CD4-positive, alpha-beta T cell (primary cell): ENCODE measurements at regions of chr18 and their contacts with region 1.

Region 1: DNA sequence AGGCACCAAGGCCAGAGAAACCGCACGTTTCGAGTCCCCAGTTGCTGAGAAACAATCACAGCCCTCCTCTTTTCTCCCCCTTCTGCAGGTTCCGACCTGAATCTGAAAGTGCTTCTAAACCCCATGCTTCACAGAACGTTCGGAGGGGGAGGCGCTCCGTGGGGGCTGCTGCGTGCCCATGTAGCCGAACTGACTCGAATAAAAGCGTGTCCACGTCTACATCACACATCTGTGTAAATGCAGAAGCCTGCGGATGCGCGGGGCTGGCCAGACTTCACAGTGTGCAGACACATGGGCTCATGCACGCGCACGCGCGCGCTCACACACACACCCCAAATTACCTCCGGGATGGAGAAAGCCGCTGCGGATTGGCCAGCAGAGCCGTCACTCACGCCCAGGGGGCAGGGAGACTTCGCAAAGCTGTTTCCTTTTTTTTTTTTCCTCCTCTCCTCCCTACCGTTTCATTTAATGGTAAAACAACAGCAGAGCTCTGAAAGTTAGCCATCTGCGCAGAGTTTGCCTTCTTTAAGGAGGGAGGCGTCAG is 2.3 kb downstream of the ZNF516 start:
- DNase-seq: peak; percentile 96 to 100 (median 98)
- ATAC-seq: peak; percentile 68
- H3K4me3 ChIP-seq: peak overlapping the region; percentile 60
- H3K4me3 Mint-ChIP-seq: peak overlapping the region; percentile 95
- H3K27ac ChIP-seq: peak overlapping the region in 1 of 2 donors; percentile 37
- H3K27ac Mint-ChIP-seq: peak overlapping the region; percentile 82
- H3K4me1 ChIP-seq: peaks cover 36% of the 10 kb centered on the region
- H3K4me1 Mint-ChIP-seq: peaks cover 65% of the 10 kb centered on the region
- H3K27me3 ChIP-seq: peaks cover 13 to 24% of the 10 kb centered on the region in 2 experiments
- H3K27me3 Mint-ChIP-seq: peaks cover 82% of the 10 kb centered on the region
- CTCF ChIP-seq: no peak

Region 2: DNA sequence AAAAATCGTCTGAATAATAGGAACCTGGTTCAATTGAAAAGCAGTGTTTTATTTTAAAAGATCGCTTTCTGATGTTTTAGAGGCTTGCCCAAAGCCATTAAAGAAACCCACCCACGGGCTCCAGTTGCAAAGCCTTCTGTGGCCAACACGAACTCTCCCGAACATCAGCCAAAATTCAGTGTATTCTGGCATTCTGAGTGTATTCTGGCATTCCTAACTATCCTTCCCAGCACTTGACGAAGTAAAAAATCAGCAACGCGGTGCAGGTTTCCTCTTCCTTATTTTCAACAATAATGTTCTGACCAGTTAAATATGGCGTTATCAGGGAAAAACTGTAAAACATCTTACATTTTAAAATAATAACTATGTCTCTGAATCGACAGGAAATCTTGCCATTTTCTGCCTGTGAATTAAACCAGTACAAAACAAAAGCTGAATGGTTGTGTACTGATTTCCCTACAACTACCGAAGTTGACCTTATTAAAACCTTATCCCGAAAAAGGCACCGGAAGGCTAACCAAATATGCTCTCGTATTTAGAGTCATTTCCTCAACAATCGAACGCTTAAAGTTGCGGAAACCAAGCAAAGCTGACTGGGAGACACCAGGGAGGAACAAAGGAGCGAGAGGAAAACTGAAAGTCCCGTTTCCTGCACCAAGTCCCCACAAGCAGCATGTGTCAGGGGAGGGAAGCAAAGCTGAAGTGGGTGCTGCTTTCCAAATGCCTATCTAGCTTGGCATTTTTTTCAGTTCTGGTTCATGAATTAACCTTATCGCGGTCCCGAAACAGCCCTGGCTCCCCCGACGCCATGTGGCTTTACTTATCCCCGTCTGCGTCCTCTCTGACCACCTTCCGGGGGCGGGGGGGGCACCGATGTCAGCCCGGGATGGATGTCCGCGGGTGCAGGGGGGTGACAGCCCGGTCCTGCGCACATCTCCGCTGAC is 42.0 kb before region 1 on chr18:
- CTCF ChIA-PET with region 1: no interaction called
- POLR2A ChIA-PET with region 1: interaction called, 3 read pairs
- intact Hi-C with region 1: loop called in 1 of 2 experiments (anchors 2 kb)
- DNase-seq: peak in 4 of 14 experiments; percentile 15 to 41 (median 28)
- ATAC-seq: peak; percentile 32
- H3K4me3 ChIP-seq: peak overlapping the region; percentile 56
- H3K4me3 Mint-ChIP-seq: peak overlapping the region; percentile 91
- H3K27ac ChIP-seq: no peak overlapping the region
- H3K27ac Mint-ChIP-seq: no peak overlapping the region
- H3K4me1 ChIP-seq: peaks cover 24% of the 10 kb centered on the region
- H3K4me1 Mint-ChIP-seq: peaks cover 54% of the 10 kb centered on the region
- H3K27me3 ChIP-seq: peaks cover 0 to 16% of the 10 kb centered on the region in 2 experiments
- H3K27me3 Mint-ChIP-seq: peaks cover 13% of the 10 kb centered on the region
- CTCF ChIP-seq: no peak

Region 3: GRCh38 chr18:76518123-76518859 is 25.6 kb after region 1 on chr18:
- CTCF ChIA-PET with region 1: no interaction called
- POLR2A ChIA-PET with region 1: interaction called, 7 read pairs
- intact Hi-C with region 1: loop called in 1 of 2 experiments (anchors 2 kb)
- DNase-seq: peak in 2 of 14 experiments; percentile 8 to 31
- ATAC-seq: peak; percentile 41
- H3K4me3 ChIP-seq: peak overlapping the region; percentile 40
- H3K4me3 Mint-ChIP-seq: peak overlapping the region; percentile 72
- H3K27ac ChIP-seq: no peak overlapping the region
- H3K27ac Mint-ChIP-seq: no peak overlapping the region
- H3K4me1 ChIP-seq: peaks cover 8% of the 10 kb centered on the region
- H3K4me1 Mint-ChIP-seq: peaks cover 22% of the 10 kb centered on the region
- H3K27me3 ChIP-seq: peaks cover 14 to 17% of the 10 kb centered on the region in 2 experiments
- H3K27me3 Mint-ChIP-seq: peaks cover 57% of the 10 kb centered on the region
- CTCF ChIP-seq: no peak

Region 4: DNA sequence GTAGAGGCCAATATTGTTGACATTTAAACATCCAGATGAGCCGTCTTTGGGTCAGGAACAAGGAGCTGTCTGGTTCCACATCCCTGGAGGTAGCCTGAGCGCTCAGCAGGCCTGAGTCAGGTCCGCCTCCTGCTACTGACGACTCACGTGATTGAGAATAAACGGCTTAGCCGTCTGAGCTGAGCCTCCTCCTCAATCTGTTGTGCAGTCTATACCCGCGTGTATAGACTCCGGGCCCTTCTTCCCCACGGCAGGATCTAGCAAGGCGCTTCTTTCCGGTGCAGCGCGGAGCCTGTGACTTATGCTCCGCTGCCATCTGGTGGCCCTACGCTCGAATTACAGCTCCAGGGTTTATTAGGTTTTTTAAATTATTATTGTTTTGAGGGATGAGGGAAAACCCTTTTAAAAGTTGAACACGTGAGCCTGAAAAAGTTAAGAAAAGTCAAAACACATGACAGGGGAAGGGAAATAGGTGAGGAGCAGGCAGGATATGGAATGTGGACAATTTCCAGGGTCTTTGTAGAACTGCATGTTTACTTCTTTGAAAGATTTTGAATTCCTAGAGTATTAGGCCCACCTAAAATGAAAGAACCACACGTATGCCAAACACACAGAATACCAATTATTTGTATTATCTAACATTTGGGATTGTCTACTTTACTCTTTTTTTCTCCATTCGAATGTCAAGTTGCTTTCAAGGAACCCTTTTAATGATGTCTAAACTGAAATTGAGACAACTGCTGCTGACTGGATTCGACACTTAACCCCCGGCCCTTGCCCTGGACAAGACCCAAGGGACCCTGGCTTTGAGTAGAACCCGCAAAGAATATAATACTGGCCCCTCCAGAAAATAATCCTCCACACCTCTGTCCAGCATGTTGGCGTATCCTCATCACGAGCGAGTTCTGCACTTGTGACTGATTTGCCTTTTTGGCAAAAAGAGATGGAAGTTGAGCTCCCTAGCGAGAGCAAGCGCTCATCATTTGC is 217.2 kb after region 1 on chr18:
- CTCF ChIA-PET with region 1: no interaction called
- POLR2A ChIA-PET with region 1: no interaction called
- intact Hi-C with region 1: loop called in 1 of 2 experiments (anchors 10 kb)
- DNase-seq: peak; percentile 41 to 80 (median 52)
- ATAC-seq: peak; percentile 97
- H3K4me3 ChIP-seq: no peak overlapping the region
- H3K4me3 Mint-ChIP-seq: no peak overlapping the region
- H3K27ac ChIP-seq: no peak overlapping the region
- H3K27ac Mint-ChIP-seq: no peak overlapping the region
- H3K4me1 ChIP-seq: peaks cover 5% of the 10 kb centered on the region
- H3K4me1 Mint-ChIP-seq: peaks cover 11% of the 10 kb centered on the region
- H3K27me3 ChIP-seq: no peaks in the 10 kb centered on the region
- H3K27me3 Mint-ChIP-seq: peaks cover 5% of the 10 kb centered on the region
- CTCF ChIP-seq: peak; percentile 90

Region 5: DNA sequence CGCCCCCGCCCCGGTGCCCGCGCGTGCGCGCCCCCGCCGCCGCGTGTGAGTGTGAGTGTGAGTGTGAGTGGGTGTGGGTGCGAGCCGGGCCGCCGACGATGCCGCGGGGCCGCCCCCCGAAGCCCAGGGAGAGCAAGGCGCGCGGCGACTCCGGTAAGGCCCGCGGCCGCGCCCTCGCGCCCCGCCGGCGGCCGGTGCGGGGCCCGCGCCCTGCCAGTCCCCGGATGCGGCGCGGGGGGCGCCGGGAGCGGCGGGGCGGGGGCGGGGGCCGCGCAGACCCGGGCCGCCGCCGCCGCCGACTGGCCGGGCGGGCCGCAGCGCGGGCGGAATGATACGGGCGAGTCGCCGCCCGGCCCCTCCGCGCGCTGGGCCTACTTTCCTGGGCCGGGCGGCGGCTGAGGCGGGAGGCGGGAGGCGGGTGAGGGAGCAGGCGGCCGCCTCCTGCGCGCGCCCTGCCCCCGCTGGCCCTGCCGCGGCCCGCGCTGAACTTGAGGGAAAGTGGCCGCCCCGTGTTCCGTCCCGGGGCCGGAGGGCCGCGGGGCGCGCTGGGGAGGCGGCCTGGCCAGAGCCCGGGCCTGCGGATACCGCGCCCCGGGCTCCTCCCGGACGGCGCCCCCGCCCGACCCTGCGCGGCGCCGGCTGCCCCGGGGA is 329.9 kb after region 1 on chr18 and contains the start of gene ZNF236:
- CTCF ChIA-PET with region 1: no interaction called
- POLR2A ChIA-PET with region 1: no interaction called
- intact Hi-C with region 1: loop called in 1 of 2 experiments (anchors 2 kb)
- DNase-seq: peak; percentile 39 to 88 (median 62)
- ATAC-seq: peak; percentile 43
- H3K4me3 ChIP-seq: peak within 1 kb of the TSS; percentile 97
- H3K4me3 Mint-ChIP-seq: peak within 1 kb of the TSS; percentile 96
- H3K27ac ChIP-seq: peak within 1 kb of the TSS; percentile 90 to 91
- H3K27ac Mint-ChIP-seq: peak within 1 kb of the TSS; percentile 96
- H3K4me1 ChIP-seq: peaks cover 47% of the 10 kb centered on the region
- H3K4me1 Mint-ChIP-seq: peaks cover 62% of the 10 kb centered on the region
- H3K27me3 ChIP-seq: no peaks in the 10 kb centered on the region
- H3K27me3 Mint-ChIP-seq: no peaks in the 10 kb centered on the region
- CTCF ChIP-seq: no peak
- total RNA-seq, gene ZNF236: 25.7 to 27.9 TPM